ENCODE measurements at regions of chr14 and their contacts with region 1.

Region 1: DNA sequence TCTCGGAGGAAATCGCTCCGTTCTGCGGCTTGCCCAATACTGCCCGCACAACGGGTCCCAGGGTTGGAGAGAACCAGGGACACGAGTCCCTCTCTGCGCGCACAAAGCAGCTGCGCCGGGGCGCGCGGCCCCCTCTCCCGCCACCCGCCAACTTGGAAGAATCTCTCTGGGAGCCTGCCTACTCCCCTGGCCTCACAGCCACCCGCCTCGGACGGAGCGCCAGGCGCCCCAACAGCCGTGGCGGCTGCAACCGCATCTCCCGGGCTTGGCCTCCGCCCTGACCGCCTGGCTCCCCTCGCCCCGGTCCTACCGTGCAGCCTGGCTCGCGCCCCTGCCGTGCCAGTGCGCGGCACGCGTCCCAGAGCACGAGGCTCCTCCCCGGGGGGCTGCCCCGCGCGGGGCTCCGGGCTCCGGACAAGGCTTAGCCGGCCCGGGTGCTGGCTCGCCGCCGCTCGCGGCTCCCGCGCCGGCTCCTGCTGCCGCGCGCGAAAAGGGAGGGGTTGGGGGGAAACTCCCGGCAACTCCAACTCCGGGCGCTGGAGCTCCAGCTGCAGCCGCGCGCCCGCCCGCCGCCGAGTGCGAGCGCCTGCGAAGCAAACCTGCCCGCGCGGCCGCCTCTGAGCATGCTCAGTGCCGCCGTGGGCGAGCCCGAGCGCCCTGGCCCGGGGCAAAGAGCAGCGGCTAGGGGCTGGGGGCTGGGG is at the start of gene STXBP6:
- DNase-seq: peak in 1 of 4 experiments; percentile 17
- ATAC-seq: peak; percentile 52; the same call in 2 of the 3 replicates
- H3K4me3 ChIP-seq: no peak within 1 kb of the TSS
- H3K27ac ChIP-seq: no peak within 1 kb of the TSS
- H3K4me1 ChIP-seq: peaks cover 14% of the 10 kb centered on the region in 2 experiments; a peak in 4 of 5 replicates
- H3K27me3 ChIP-seq: peaks cover 6 to 28% of the 10 kb centered on the region in 2 experiments; a peak in 4 of 5 replicates
- CTCF ChIP-seq: no peak
- EP300 ChIP-seq: no peak
- POLR2A ChIP-seq: no peak
- RAD21 ChIP-seq: no peak
- polyA plus RNA-seq, gene STXBP6: 0.84 to 0.89 TPM

Region 2: GRCh38 chr14:24710403-24711112 is 339.2 kb before region 1 on chr14:
- CTCF ChIA-PET with region 1: no interaction called
- POLR2A ChIA-PET with region 1: no interaction called
- in situ Hi-C with region 1: no loop called
- intact Hi-C with region 1: loop called (anchors 10 kb)
- DNase-seq: peak; percentile 33 to 53 (median 36)
- ATAC-seq: peak; percentile 84
- H3K4me3 ChIP-seq: no peak overlapping the region
- H3K27ac ChIP-seq: no peak overlapping the region
- H3K4me1 ChIP-seq: no peaks in the 10 kb centered on the region
- H3K27me3 ChIP-seq: peaks cover 2 to 5% of the 10 kb centered on the region in 2 experiments; a peak in 3 of 5 replicates
- CTCF ChIP-seq: peak; percentile 52 to 70 (median 60)
- EP300 ChIP-seq: no peak
- POLR2A ChIP-seq: no peak
- RAD21 ChIP-seq: peak; percentile 31 to 36; a peak in 3 of 4 replicates

Region 3: DNA sequence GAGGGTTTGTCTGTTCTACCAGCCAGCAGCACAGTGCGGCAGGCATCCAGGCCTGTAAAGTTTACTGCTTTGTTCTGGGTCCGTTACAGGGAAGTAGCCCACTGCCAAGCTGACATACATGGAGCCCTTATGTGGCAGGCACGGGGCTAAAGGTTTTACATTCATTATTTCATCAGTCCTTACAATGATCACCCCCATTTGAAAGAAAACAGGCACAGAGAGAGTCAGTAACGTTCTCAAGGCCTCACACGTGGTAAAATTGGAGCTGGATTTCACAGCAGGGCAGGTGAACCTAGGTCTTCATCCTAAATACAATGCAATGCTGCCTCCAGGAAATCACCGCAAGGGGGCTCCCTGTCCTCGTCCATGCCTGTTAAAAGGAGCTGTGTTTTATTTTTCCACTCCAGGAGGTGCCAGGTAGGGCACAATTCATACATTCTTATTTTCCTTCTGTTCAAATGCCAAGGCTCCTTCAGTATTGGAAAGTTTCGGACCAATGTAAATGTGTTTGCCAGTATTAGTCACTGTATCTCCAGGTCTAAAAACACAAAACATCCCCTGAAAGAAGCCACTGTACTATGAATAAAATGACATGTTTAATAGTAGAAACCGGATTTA is 243.5 kb before region 1 on chr14:
- CTCF ChIA-PET with region 1: no interaction called
- POLR2A ChIA-PET with region 1: no interaction called
- in situ Hi-C with region 1: loop called (anchors 10 kb)
- intact Hi-C with region 1: no loop called
- DNase-seq: peak; percentile 38 to 67 (median 41)
- ATAC-seq: peak; percentile 87
- H3K4me3 ChIP-seq: no peak overlapping the region
- H3K27ac ChIP-seq: no peak overlapping the region
- H3K4me1 ChIP-seq: no peaks in the 10 kb centered on the region
- H3K27me3 ChIP-seq: no peaks in the 10 kb centered on the region; a peak in 2 of 5 replicates
- CTCF ChIP-seq: peak; percentile 74 to 80 (median 78)
- EP300 ChIP-seq: no peak
- POLR2A ChIP-seq: no peak
- RAD21 ChIP-seq: peak; percentile 77 to 82

Region 4: DNA sequence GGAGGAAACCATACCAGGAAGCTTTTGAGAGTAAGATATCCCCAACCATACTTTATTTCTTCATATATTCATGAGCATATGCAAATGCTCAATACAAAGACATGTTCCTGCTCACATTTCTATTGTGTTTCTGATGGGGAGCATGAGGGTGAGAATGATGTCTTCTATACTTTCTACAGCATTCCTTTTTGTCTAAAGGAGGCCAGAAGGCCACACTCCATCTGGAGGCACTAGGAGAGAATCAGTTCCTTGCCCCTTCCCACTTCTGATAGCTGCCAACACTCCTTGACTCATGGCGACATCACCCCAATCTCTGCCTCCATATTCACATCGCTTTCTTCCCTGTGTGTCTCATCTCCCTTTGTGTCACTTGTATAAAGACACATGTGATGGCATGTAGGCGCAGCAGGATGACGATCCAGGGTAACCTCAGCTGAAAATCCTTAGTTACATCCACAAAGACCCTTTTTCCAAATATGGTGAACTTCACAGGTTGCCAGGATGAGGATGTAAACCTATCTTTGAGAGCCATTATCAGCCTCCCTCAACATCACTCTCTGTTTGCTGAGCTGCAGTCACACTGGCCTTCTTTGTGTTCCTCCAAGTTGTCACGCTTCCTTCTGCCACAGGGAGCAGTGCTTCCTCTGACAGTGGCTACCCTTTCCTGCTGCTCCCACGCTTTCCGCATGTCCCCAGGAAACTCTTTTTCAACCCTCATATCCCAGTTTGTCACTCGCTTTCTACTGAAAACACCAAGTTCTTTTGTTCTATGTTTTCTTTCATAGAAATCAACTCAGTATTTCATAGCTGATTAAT is 96.7 kb before region 1 on chr14:
- CTCF ChIA-PET with region 1: no interaction called
- POLR2A ChIA-PET with region 1: no interaction called
- in situ Hi-C with region 1: no loop called
- intact Hi-C with region 1: loop called (anchors 10 kb)
- DNase-seq: peak in 3 of 4 experiments; percentile 6 to 37 (median 17)
- ATAC-seq: peak; percentile 91
- H3K4me3 ChIP-seq: no peak overlapping the region
- H3K27ac ChIP-seq: no peak overlapping the region
- H3K4me1 ChIP-seq: no peaks in the 10 kb centered on the region
- H3K27me3 ChIP-seq: peaks cover 0 to 12% of the 10 kb centered on the region in 2 experiments; a peak in 3 of 5 replicates
- CTCF ChIP-seq: peak; percentile 33 to 46 (median 38)
- EP300 ChIP-seq: no peak
- POLR2A ChIP-seq: no peak
- RAD21 ChIP-seq: peak; percentile 21 to 38; a peak in 2 of 4 replicates

Region 5: DNA sequence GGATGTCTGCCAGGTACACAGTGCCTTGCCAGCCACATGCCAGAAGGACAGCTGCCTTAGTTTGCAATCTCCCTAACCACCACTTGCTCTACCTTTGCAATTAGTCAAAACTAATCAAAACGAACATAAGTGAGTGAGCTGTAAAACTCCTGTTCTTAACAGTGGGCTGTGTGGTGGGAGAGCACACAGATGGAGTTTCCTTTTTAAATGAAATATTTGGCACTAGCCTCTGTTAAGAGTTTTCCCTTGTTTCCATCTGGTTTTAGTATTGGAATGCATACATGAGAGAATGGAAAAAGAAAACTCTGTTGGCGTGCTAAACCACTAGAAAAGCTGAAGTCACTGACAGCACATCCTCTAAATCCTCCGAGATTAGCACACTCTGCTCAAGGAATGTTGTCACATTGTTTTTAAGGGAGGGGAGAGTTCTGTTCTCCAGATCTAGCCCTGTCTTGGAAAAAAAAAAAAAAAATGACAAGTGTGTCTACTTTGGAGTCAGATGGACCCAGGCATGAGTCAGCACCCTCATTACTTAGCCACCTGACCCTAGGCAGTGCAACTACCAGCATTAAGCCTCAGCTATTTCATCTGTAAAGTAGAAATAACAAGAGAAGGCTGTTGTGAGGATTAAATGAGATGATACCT is 83.7 kb before region 1 on chr14:
- CTCF ChIA-PET with region 1: no interaction called
- POLR2A ChIA-PET with region 1: no interaction called
- in situ Hi-C with region 1: no loop called
- intact Hi-C with region 1: no loop called
- DNase-seq: peak in 1 of 4 experiments; percentile 56
- ATAC-seq: peak; percentile 68
- H3K4me3 ChIP-seq: no peak overlapping the region
- H3K27ac ChIP-seq: no peak overlapping the region
- H3K4me1 ChIP-seq: peaks cover 0 to 4% of the 10 kb centered on the region in 2 experiments; a peak in 1 of 5 replicates
- H3K27me3 ChIP-seq: no peaks in the 10 kb centered on the region
- CTCF ChIP-seq: no peak
- EP300 ChIP-seq: no peak
- POLR2A ChIP-seq: no peak
- RAD21 ChIP-seq: no peak

Region 6: GRCh38 chr14:25132732-25133422 is 83.2 kb after region 1 on chr14:
- CTCF ChIA-PET with region 1: no interaction called
- POLR2A ChIA-PET with region 1: interaction called, 3 read pairs
- in situ Hi-C with region 1: no loop called
- intact Hi-C with region 1: loop called (anchors 10 kb)
- DNase-seq: peak; percentile 41 to 61 (median 42)
- ATAC-seq: peak; percentile 95
- H3K4me3 ChIP-seq: no peak overlapping the region
- H3K27ac ChIP-seq: no peak overlapping the region
- H3K4me1 ChIP-seq: no peaks in the 10 kb centered on the region
- H3K27me3 ChIP-seq: no peaks in the 10 kb centered on the region
- CTCF ChIP-seq: peak; percentile 46 to 67 (median 55)
- EP300 ChIP-seq: no peak
- POLR2A ChIP-seq: no peak
- RAD21 ChIP-seq: peak; percentile 42 to 64; a peak in 3 of 4 replicates

Measured in K562 (cell line).